Lower leg skin (tissue), 4 donors: ENCODE measurements at regions of chr20 and their contacts with region 1.

Region 1: DNA sequence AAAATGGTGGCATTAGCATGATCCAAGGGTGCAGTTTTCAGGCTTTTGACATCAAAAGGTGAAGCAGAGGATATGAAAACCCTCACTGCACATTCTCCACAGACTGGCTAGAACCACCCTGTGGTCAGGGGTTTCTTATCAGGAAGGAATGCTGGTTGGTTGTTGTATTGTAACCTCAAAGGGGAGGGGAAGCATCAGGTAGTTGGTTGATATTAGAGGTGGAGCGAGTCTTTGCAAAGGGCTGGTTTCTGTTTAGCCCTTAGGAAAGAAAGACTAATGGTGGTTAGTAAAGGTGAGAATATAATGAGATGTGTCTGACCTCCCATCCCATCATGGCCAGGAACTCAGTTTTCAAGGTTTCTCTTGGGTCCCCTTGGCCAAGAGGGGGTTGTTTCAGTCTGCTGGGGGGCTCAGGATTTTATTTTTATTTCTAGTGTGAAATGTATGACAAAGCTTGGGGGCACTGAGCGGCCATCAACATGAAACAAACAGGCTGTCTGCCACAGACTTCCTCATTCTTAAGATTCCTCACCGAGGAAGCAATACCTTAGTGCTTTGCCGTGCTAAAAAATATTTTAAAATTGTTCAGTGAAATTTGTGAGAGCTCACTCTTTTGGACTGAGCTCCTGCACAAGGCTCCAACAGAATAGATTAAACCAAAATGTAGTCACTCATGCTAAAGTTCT is 47.5 kb upstream of the PROKR2 start:
- DNase-seq: no peak
- H3K4me3 ChIP-seq: no peak overlapping the region
- CTCF ChIP-seq: no peak
- POLR2A ChIP-seq: no peak

Region 2: GRCh38 chr20:5349448-5349847 is 14.8 kb before region 1 on chr20:
- intact Hi-C with region 1: loop called (anchors 2 kb)
- DNase-seq: no peak
- H3K4me3 ChIP-seq: no peak overlapping the region
- CTCF ChIP-seq: no peak
- POLR2A ChIP-seq: no peak

Region 3: GRCh38 chr20:5430670-5431069 is 66.4 kb after region 1 on chr20:
- intact Hi-C with region 1: no loop called
- DNase-seq: no peak
- H3K4me3 ChIP-seq: no peak overlapping the region
- CTCF ChIP-seq: no peak
- POLR2A ChIP-seq: no peak